Ascending aorta (tissue), 2 donors: ENCODE measurements at regions of chr16 and their contacts with region 1.

Region 1: GRCh38 chr16:14013571-14014282 is 57.4 kb upstream of the MRTFB start:
- DNase-seq: peak in 1 of 2 donors; percentile 74
- H3K4me3 ChIP-seq: peak overlapping the region; percentile 8 to 17
- H3K27ac ChIP-seq: peak overlapping the region; percentile 77 to 90
- H3K4me1 ChIP-seq: peaks cover 9 to 48% of the 10 kb centered on the region in 2 donors
- H3K27me3 ChIP-seq: no peaks in the 10 kb centered on the region
- CTCF ChIP-seq: no peak

Region 2: DNA sequence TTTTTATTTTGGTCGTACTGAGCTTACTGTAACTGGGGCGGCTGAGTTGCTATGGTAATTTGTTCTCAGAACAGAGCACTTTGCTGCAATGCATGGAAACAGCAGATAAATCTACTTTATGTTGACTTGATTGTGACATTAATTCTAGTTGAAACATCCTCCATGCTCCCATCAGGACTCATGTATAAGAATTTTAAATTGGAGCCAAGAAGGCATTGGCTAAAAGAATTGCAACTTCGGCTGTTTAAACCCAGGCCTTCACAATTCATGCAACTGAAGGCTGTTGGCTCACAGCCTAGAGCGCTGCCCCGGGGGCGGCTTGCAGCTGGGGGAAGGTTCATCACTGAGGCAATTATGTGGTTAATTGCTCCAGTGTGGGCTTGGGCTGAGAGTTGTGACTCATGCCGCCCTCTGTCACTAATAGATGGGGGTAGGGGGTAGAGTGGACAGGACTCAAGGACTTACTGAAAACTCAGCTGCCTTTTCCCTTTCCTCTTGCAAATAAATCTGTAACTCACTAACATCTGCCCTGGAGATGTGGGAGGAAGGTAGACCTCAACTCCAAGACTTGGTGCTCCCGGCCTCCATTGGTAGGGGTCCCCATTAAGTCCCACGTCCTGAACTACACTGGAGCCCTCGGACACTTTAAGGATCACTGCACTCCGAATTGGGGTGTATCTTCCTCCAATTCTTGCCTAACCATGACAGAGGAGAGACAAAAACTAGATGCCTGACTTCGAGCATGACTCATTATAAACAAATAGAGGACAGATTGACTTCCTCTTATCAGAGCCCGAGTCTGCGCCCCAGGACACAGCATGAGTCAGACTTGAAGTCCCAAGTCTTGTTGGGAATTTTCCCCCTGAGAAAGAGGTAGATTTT is 56.3 kb before region 1 on chr16:
- intact Hi-C with region 1: loop called (anchors 5 kb)
- DNase-seq: peak in 1 of 2 donors; percentile 83
- H3K4me3 ChIP-seq: peak overlapping the region; percentile 44 to 50
- H3K27ac ChIP-seq: peak overlapping the region; percentile 59 to 67
- H3K4me1 ChIP-seq: peaks cover 0 to 11% of the 10 kb centered on the region in 2 donors
- H3K27me3 ChIP-seq: no peaks in the 10 kb centered on the region
- CTCF ChIP-seq: no peak

Region 3: GRCh38 chr16:14057878-14058382 is 44.2 kb after region 1 on chr16:
- intact Hi-C with region 1: loop called (anchors 5 kb)
- DNase-seq: peak in 1 of 2 donors; percentile 81
- H3K4me3 ChIP-seq: peak overlapping the region in 1 of 2 donors; percentile 53
- H3K27ac ChIP-seq: peak overlapping the region; percentile 77 to 87
- H3K4me1 ChIP-seq: peaks cover 0 to 4% of the 10 kb centered on the region in 2 donors
- H3K27me3 ChIP-seq: no peaks in the 10 kb centered on the region
- CTCF ChIP-seq: no peak

Region 4: DNA sequence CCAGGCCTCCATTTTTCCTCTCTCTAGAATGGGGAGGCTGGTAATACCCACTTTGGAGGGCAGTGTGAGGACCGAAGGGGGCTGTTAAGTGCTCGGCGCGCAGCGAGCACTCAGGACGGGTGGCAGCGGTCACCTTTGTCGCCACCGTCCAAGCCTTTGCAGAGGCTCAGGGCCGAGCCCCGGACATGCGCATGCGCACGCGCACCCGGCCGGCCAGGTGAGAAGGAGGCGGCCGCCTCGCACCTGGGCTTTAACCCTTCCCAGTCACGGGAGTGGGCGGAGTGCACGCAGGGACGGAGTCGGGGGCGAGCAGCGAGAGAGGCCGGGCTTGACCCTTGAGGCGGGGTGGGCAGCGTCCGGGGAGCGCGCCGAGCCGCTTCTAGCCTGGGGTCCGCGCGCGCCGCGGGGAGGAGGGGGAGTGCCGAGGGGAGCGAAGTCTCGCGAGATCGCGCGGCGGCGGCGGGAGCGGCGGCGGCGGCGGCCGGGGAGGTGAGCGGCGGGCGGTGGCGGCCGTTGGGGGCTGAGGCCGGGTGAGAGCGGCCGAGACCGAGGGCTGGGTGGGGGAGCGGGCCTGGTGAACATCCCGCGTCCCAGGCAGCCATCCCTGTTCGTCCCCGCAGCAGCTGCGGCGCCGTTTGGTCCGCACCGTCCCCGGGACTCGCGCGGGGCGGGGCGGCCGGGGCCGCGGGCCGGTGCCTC is 57.3 kb after region 1 on chr16 and contains the start of gene MRTFB:
- intact Hi-C with region 1: loop called (anchors 5 kb)
- DNase-seq: peak in 1 of 2 donors; percentile 85
- H3K4me3 ChIP-seq: peak within 1 kb of the TSS; percentile 100
- H3K27ac ChIP-seq: peak within 1 kb of the TSS; percentile 57 to 74
- H3K4me1 ChIP-seq: peaks cover 0 to 13% of the 10 kb centered on the region in 2 donors
- H3K27me3 ChIP-seq: no peaks in the 10 kb centered on the region
- CTCF ChIP-seq: no peak
- total RNA-seq, gene MRTFB: 89.4 TPM

Region 5: GRCh38 chr16:14186007-14186794 is 172.5 kb after region 1 on chr16:
- intact Hi-C with region 1: loop called (anchors 5 kb)
- DNase-seq: no peak
- H3K4me3 ChIP-seq: peak overlapping the region; percentile 48 to 55
- H3K27ac ChIP-seq: peak overlapping the region; percentile 66 to 67
- H3K4me1 ChIP-seq: peaks cover 0 to 11% of the 10 kb centered on the region in 2 donors
- H3K27me3 ChIP-seq: no peaks in the 10 kb centered on the region
- CTCF ChIP-seq: peak; percentile 28 to 57 (median 39)

Region 6: DNA sequence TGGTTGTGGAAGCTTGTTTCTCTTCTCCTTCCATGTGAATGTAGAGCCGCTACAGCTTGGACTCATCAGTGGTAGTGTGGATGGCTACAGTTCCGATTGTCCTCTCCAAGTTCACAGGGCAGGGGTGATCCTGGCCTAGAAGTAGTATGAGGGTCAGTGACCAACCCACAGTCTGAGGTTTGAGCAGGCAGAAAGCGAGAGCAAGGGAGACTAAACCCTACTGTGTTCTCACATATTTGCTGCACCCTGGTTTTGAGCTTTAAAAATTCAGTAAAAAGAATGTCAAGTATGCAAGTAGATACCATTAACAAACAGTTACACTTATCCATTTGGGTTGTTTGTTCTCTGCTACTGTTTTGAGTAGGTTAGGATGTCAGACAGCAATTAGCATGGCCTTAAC is 206.3 kb after region 1 on chr16:
- intact Hi-C with region 1: no loop called
- DNase-seq: no peak
- H3K4me3 ChIP-seq: no peak overlapping the region
- H3K27ac ChIP-seq: no peak overlapping the region
- H3K4me1 ChIP-seq: no peaks in the 10 kb centered on the region
- H3K27me3 ChIP-seq: no peaks in the 10 kb centered on the region
- CTCF ChIP-seq: no peak

Region 7: DNA sequence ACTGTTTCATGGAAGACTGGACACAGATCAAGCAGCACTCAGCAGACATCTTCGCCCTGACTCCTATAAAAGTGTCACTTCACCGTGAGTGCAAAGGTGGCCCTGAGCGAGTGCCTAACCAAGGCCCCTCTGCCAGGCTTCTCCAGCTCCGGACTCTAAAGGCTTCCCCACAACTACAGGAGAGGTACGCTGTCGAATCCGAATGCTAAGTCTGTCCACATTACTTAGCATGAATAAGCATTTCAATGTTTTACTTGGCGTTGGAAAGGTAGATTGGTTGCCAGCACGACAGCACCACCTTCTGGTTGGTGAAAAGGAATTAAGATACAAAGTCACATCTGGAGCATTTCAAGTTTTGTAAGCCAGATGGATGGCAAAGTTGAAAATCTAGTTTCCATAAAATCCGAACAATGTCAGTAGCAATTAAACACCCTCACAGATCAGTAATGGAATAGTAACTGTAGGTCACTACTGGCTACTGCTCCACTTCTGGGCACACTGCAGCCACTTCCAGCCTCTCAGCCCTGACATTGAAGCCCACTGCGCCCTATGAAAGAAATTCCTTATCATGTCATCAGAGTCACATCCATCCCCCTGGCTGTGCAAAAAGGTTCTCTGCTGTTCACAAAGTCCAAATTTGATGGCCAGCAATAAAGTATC is 515.4 kb after region 1 on chr16:
- intact Hi-C with region 1: loop called (anchors 10 kb)
- DNase-seq: peak; percentile 16 to 85
- H3K4me3 ChIP-seq: peak overlapping the region in 1 of 2 donors; percentile 52
- H3K27ac ChIP-seq: peak overlapping the region in 1 of 2 donors; percentile 62
- H3K4me1 ChIP-seq: peaks cover 9 to 24% of the 10 kb centered on the region in 2 donors
- H3K27me3 ChIP-seq: no peaks in the 10 kb centered on the region
- CTCF ChIP-seq: peak; percentile 62 to 83 (median 74)